GM13977 (cell line): ENCODE measurements at regions of chr11 and their contacts with region 1.

Region 1: DNA sequence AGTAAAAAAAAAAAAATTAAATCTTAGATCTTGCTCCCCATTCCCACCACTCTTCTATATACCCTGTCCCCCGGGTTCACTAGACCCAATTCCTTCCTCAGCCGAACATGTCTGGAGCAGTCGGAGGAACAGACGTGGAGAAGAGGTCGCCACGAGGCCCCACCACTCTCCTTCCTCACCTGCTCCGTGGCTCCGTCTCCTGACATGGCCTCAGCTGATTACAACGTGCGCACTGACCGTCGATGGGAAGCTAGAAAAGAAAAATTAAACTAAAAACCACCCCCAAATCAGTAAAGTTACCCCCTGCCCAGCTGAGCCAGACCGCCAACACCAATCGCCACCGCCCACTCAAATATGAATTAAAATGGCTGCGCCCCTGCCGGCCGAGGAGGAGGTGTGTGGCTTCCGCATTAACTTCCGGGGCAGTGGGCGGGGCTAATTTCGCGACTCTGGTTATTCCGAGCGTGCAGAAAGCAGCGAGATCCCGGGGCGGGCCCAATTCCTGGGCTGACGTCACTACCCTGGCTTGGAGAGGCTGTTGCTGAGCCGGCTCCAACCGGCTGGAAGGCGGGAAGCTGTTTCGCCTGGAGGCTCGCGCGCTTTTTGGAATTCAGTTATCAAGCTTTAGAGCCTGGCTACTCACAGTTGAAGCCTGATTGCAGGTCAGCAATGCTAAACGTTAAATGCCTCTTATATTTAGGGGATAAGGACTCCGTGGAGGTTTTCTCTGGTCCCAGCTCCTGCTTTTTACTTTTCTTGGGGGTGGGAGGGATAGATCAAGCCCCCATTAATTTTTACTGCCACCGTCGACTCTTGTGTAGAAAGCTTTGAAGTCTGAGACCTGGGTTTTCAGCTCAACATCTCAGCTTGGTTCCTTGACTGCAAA is at the start of gene CSTF3:
- DNase-seq: peak; percentile 87
- CTCF ChIP-seq: no peak

Region 2: DNA sequence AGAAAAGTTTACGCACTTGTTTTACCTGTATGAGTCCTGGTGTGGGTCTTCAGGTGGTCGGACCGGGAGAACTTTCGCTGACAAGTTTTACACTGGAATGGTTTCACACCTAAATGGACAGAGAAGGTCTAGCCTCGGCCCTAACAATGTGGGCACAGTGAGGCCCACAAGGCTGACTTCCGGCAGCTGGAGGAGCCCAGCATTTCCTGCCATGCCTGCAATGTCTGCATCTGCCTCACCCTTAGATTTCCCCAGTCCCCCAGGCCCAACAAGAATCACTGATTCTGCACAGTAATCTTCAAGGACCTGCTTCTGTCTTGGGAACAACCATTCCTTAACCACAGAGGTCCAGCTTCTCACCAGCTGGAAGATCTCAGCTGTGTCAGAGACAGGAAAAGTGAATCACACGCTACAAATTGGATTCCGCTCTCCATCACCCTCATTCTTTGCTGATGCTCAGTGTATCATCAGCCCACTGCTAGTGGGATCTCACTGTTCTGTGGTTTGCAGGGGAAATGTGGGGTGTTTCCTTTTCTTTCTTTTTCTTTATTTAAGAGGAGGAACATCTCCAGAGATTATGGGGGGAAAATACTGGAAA is 769.3 kb before region 1 on chr11:
- in situ Hi-C with region 1: no loop called
- DNase-seq: no peak
- CTCF ChIP-seq: no peak

Region 3: DNA sequence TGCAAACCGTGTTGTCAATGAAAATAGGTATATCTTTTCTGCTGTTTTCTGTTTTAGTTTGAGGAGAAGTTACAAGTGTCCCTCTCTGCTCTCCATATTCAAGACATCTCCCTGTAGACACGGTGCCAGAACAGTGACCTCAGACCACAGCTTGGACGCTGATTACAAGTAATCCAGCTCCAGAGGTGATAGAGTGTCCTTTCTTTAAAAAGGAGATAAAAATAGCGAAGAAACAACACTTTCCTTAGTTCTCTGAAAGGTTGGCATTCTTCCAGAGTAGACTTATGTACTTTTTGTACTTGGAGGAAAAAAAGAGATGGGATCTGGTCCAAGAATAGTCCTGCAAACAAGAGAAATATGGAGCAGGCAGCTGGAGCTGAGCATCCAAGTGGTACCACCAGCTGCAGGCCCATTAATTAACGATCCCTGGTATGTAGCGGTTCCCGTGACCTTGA is 683.1 kb before region 1 on chr11:
- in situ Hi-C with region 1: no loop called
- DNase-seq: no peak
- CTCF ChIP-seq: no peak

Region 4: DNA sequence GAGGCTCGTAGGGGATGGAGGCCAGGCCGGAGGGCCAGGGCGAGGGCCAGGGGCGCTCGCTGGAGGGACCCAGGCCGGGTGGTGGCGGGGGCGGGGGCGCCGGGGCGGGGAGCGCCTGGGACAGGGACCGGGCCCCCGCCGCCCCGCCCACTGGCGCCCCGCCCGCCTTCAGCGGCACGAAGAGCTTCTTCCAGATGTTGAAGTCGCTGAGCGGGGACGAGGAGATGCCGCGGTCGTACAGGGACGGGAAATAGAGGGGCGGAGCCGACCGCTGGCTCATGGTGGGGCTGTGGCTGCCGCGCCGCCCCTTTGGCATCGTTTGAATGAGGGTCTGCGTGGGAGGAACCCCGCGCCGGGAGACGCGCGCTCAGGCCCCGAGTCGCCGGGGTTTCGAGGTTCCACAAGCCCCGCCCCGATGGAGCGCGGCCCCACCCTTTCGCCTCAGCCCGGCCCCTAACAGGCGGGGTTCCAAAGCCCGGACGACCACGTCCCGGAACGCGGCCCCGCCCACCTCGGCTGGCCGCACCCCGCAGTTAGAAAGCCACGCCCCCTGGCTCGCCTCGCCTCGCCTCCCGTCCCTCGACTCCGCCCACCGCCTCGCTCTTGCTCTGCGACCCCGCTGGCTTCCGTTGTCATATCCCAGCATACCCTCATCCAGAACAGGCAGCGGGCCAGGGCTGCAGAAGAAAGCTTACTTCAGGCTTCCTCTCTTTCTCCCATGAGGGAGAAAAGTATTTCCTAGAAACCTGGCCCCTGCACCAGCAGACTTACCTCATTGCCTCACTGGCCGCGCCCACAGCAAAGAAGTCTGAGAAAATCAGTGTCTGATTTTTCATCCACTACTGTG is 539.3 kb after region 1 on chr11 and contains the start of gene C11orf91:
- in situ Hi-C with region 1: loop called (anchors 25 kb)
- DNase-seq: peak; percentile 97
- CTCF ChIP-seq: no peak